Left ventricle myocardium superior (tissue), 1 donor: ENCODE measurements at regions of chr17 and their contacts with region 1.

Region 1: DNA sequence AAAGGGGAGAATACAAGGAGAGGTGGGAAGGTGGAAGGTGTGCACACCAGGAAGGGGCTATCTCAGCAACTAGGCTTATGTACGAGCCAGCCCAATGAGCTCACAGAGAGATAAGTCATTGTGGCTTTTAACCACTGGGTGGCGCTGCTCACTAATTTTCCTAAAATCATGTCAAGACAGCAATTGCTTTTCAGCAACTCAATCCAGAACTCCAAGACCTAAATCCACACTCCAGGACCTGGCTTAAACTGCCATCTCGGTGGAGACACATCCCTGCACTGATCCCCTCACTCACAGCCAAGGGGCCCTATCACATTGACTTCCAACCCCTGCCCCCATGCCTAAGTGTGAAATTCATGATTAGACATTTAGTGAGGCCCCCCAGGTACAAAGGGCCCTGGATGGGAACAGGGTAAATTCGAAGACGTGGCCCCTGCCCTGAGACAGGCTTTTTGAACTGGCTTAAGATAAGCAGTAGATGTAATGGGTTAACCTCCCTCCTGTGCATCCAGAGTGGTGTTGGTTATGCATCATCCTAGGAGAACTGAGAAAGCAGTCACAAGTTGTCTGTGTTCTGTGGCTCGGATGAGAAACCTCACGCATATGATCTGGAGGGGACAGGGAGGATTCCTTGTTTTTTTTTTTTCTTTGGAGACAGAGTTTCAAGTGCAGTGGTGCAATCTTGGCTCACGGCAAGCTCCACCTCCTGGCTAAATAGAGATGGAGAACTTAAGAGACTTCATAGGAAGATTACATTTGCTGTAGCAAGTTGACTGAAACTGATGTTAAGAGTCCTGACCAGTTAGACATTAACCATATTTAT is 11.5 kb downstream of the CCL16 start:
- DNase-seq: peak; percentile 69
- ATAC-seq: peak; percentile 79

Region 2: GRCh38 chr17:36072431-36073121 is 102.8 kb after region 1 on chr17:
- intact Hi-C with region 1: loop called (anchors 10 kb)
- DNase-seq: peak; percentile 58
- ATAC-seq: no peak

Region 3: GRCh38 chr17:36148559-36149295 is 179.0 kb after region 1 on chr17:
- intact Hi-C with region 1: loop called (anchors 10 kb)
- DNase-seq: peak; percentile 74
- ATAC-seq: peak; percentile 94

Region 4: DNA sequence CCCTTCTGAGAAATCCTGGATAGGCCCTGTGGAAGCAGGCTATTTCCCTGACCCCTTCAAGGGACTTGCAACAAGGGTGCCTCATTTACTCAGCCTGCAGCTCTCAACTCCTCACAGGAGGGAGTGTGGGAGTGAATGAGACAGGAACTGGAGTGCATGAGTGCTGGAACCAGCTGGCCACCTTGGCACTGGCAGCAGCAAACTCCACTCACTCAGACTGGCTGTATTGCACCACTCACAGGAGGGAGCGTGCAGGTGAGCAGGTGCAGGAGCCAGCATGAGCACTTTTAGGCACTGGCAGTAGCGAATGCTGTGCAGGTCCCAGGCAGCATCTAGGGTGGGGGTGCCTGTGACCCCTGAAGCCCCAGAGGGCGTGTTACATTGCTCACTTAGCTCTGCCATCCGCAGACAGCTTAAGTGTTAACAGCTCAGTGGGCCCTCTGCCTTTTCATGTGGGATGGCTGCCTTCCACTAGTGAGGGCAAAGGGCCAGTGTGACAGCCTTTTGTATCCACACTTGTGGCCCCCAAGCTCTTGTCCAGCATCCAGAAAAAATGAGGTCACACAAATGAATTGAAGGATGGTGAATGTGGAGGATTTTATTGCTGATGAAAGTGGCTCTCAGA is 505.7 kb after region 1 on chr17:
- intact Hi-C with region 1: loop called (anchors 10 kb)
- DNase-seq: no peak
- ATAC-seq: peak; percentile 53